GM12878 (cell line): ENCODE measurements at regions of chr20 and their contacts with region 1.

Region 1: GRCh38 chr20:43942661-43943290 is 28.1 kb downstream of the TOX2 start:
- DNase-seq: no peak
- ATAC-seq: peak; percentile 74
- H3K4me3 ChIP-seq: peak overlapping the region; percentile 50; the same call in 1 of the 2 replicates
- H3K27ac ChIP-seq: peak overlapping the region; percentile 84
- H3K4me1 ChIP-seq: peaks cover 19% of the 10 kb centered on the region
- H3K27me3 ChIP-seq: no peaks in the 10 kb centered on the region
- CTCF ChIP-seq: no peak
- EP300 ChIP-seq: peak in 1 of 2 experiments; percentile 41; a peak in 2 of 4 replicates
- POLR2A ChIP-seq: no peak
- RAD21 ChIP-seq: no peak

Region 2: GRCh38 chr20:43914311-43915210 is 28.2 kb before region 1 on chr20 and contains the start of gene TOX2:
- CTCF ChIA-PET with region 1: interaction called, 8 read pairs
- POLR2A ChIA-PET with region 1: interaction called, 13 read pairs
- RAD21 ChIA-PET with region 1: interaction called, 24 read pairs
- SMC1A ChIA-PET with region 1: interaction called, 68 read pairs
- in situ Hi-C with region 1: no loop called
- intact Hi-C with region 1: no loop called
- DNase-seq: no peak
- ATAC-seq: peak; percentile 43
- H3K4me3 ChIP-seq: peak within 1 kb of the TSS; percentile 68; the same call in 1 of the 2 replicates
- H3K27ac ChIP-seq: peak within 1 kb of the TSS; percentile 28; the same call in 1 of the 2 replicates
- H3K4me1 ChIP-seq: peaks cover 18% of the 10 kb centered on the region
- H3K27me3 ChIP-seq: peaks cover 0 to 4% of the 10 kb centered on the region in 2 experiments; a peak in 2 of 4 replicates
- CTCF ChIP-seq: no peak
- EP300 ChIP-seq: no peak
- POLR2A ChIP-seq: no peak; the same call in 1 of the 2 replicates
- RAD21 ChIP-seq: no peak
- polyA plus RNA-seq, gene TOX2: 2.6 to 6.2 TPM

Region 3: GRCh38 chr20:43925801-43926200 is 17.0 kb before region 1 on chr20:
- CTCF ChIA-PET with region 1: interaction called, 69 read pairs
- POLR2A ChIA-PET with region 1: interaction called, 12 read pairs
- RAD21 ChIA-PET with region 1: interaction called, 63 read pairs
- SMC1A ChIA-PET with region 1: interaction called, 110 read pairs
- in situ Hi-C with region 1: no loop called
- intact Hi-C with region 1: no loop called
- DNase-seq: no peak
- ATAC-seq: peak; percentile 54
- H3K4me3 ChIP-seq: no peak overlapping the region
- H3K27ac ChIP-seq: no peak overlapping the region
- H3K4me1 ChIP-seq: peaks cover 36% of the 10 kb centered on the region
- H3K27me3 ChIP-seq: no peaks in the 10 kb centered on the region
- CTCF ChIP-seq: peak in 2 of 3 experiments; percentile 8 to 36; a peak in 2 of 6 replicates
- EP300 ChIP-seq: no peak
- POLR2A ChIP-seq: no peak
- RAD21 ChIP-seq: peak; percentile 24; the same call in 1 of the 2 replicates

Region 4: DNA sequence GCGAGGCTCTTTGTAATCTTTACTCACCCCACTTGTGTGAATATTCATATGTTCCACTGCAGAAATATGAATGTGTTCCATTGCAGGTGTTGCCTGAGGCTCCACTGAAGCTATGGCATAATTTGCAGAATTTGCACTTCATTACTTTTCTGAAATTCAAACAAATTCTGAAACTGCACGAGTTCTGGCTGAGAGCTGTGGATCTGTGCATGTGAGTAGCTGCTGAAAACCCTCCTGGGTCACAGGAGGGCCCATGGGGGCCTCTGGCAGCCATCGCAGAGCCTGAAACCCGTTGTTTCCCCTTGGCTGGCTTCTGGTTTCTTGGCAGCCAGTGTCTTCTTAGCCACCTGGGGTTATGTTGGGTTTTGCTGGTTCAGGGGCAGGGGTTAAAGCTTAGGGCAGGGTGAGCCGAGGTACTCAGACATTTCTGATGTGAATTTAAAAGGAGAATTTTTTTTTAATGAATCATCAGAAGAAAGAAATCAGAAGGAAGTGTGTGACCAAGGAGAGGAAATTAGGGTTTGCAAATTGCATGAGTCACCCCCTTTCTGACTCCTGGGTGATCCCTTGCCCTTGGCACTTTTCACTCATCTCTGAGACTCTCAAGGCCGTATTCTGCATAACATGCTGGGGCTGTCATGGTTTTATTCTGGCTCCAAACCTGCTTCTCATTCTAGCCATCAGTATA is 12.4 kb after region 1 on chr20:
- CTCF ChIA-PET with region 1: interaction called, 34 read pairs
- POLR2A ChIA-PET with region 1: interaction called, 36 read pairs
- RAD21 ChIA-PET with region 1: interaction called, 29 read pairs
- SMC1A ChIA-PET with region 1: interaction called, 111 read pairs
- in situ Hi-C with region 1: no loop called
- intact Hi-C with region 1: no loop called
- DNase-seq: peak; percentile 73
- ATAC-seq: peak; percentile 85
- H3K4me3 ChIP-seq: 0 out of 2 replicates have a peak overlapping the region, but pooled peaks have one; percentile 11
- H3K27ac ChIP-seq: peak overlapping the region; percentile 9
- H3K4me1 ChIP-seq: peaks cover 40% of the 10 kb centered on the region
- H3K27me3 ChIP-seq: no peaks in the 10 kb centered on the region
- CTCF ChIP-seq: no peak
- EP300 ChIP-seq: 0 out of 4 replicates have a peak, but pooled peaks of 1 of the 2 experiments have one; percentile 5
- POLR2A ChIP-seq: no peak
- RAD21 ChIP-seq: no peak

Region 5: GRCh38 chr20:44001667-44002596 is 59.2 kb after region 1 on chr20:
- CTCF ChIA-PET with region 1: interaction called, 8 read pairs
- POLR2A ChIA-PET with region 1: interaction called, 4 read pairs
- RAD21 ChIA-PET with region 1: interaction called, 19 read pairs
- SMC1A ChIA-PET with region 1: interaction called, 9 read pairs
- in situ Hi-C with region 1: no loop called
- intact Hi-C with region 1: no loop called
- DNase-seq: peak; percentile 74
- ATAC-seq: peak; percentile 90
- H3K4me3 ChIP-seq: no peak overlapping the region
- H3K27ac ChIP-seq: no peak overlapping the region
- H3K4me1 ChIP-seq: peaks cover 16% of the 10 kb centered on the region
- H3K27me3 ChIP-seq: no peaks in the 10 kb centered on the region
- CTCF ChIP-seq: no peak
- EP300 ChIP-seq: peak in 1 of 2 experiments; percentile 6; a peak in 2 of 4 replicates
- POLR2A ChIP-seq: no peak
- RAD21 ChIP-seq: no peak

Region 6: DNA sequence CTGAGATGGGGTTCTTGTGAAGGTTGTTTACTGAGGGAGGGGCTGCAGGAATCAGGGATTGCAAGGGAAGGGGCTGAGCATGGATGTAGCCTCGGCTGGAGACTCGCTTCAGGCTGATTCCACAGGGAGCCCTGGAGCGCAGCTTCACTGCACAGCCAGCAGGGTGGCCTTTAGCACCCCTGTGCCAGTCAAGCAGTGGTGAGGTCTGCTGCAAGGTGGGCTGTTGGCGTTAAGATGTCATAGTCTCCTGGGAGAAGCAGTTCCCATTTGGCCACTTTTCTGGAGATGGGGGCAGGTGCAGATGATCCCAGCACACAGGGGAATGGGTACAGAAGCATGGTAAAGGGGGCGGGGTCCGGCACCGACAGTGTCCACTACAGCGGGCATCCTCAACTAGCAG is 98.2 kb after region 1 on chr20:
- CTCF ChIA-PET with region 1: no interaction called
- POLR2A ChIA-PET with region 1: no interaction called
- RAD21 ChIA-PET with region 1: no interaction called
- SMC1A ChIA-PET with region 1: no interaction called
- in situ Hi-C with region 1: no loop called
- intact Hi-C with region 1: no loop called
- DNase-seq: no peak
- ATAC-seq: no peak
- H3K4me3 ChIP-seq: no peak overlapping the region
- H3K27ac ChIP-seq: no peak overlapping the region
- H3K4me1 ChIP-seq: no peaks in the 10 kb centered on the region
- H3K27me3 ChIP-seq: no peaks in the 10 kb centered on the region
- CTCF ChIP-seq: no peak
- EP300 ChIP-seq: no peak
- POLR2A ChIP-seq: no peak
- RAD21 ChIP-seq: no peak

Region 7: GRCh38 chr20:44187051-44187762 is 244.4 kb after region 1 on chr20 and contains the start of gene JPH2:
- CTCF ChIA-PET with region 1: no interaction called
- POLR2A ChIA-PET with region 1: no interaction called
- RAD21 ChIA-PET with region 1: no interaction called
- SMC1A ChIA-PET with region 1: no interaction called
- in situ Hi-C with region 1: no loop called
- intact Hi-C with region 1: no loop called
- DNase-seq: no peak
- ATAC-seq: peak; percentile 21; the same call in 2 of the 3 replicates
- H3K4me3 ChIP-seq: no peak within 1 kb of the TSS
- H3K27ac ChIP-seq: no peak within 1 kb of the TSS
- H3K4me1 ChIP-seq: no peaks in the 10 kb centered on the region
- H3K27me3 ChIP-seq: peaks cover 6 to 12% of the 10 kb centered on the region in 2 experiments; a peak in 3 of 4 replicates
- CTCF ChIP-seq: no peak
- EP300 ChIP-seq: no peak
- POLR2A ChIP-seq: no peak
- RAD21 ChIP-seq: no peak
- polyA plus RNA-seq, gene JPH2: not detected